ENCODE measurements at regions of chr12 and their contacts with region 1.

Region 1: DNA sequence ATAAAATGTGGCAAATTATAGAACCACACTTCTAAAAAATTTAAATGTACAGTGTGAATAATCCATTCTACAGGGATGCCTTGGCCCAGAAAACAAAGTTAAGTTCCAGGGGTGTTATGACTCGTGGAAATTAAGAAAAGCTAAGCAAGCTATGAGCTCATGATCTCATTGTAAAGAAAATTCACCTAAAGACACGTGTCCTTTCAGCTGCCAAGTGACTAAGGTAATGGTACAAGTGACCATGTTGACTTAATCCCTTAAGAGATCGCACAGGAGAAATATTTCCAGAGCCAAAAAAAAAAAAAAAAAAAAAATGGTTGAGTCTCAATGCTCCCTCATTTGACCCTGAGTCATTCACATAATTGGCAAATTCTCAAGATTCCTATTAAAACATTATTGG is 51.4 kb upstream of the ANO2 start:
- DNase-seq: no peak
- H3K4me3 ChIP-seq: no peak overlapping the region
- H3K27ac ChIP-seq: no peak overlapping the region
- H3K4me1 ChIP-seq: no peaks in the 10 kb centered on the region
- H3K27me3 ChIP-seq: peaks cover 0 to 24% (median 2%) of the 10 kb centered on the region in 3 donors
- CTCF ChIP-seq: no peak
- EP300 ChIP-seq: no peak
- POLR2A ChIP-seq: no peak

Region 2: GRCh38 chr12:6285063-6285477 is 288.6 kb after region 1 on chr12:
- intact Hi-C with region 1: loop called (anchors 10 kb)
- DNase-seq: peak; percentile 69 to 91
- H3K4me3 ChIP-seq: no peak overlapping the region
- H3K27ac ChIP-seq: no peak overlapping the region
- H3K4me1 ChIP-seq: peaks cover 6 to 20% (median 14%) of the 10 kb centered on the region in 4 donors
- H3K27me3 ChIP-seq: no peaks in the 10 kb centered on the region
- CTCF ChIP-seq: peak in 6 of 7 experiments; percentile 61 to 93 (median 90)
- EP300 ChIP-seq: no peak
- POLR2A ChIP-seq: no peak

Measured in stomach (tissue), 19 donors.